Right ventricle myocardium inferior (tissue), 1 donor: ENCODE measurements at regions of chrX and their contacts with region 1.

Region 1: GRCh38 chrX:154478728-154479622 is at the start of gene LAGE3:
- DNase-seq: peak; percentile 97
- ATAC-seq: peak; percentile 96
- total RNA-seq, gene LAGE3: 18.5 TPM

Region 2: DNA sequence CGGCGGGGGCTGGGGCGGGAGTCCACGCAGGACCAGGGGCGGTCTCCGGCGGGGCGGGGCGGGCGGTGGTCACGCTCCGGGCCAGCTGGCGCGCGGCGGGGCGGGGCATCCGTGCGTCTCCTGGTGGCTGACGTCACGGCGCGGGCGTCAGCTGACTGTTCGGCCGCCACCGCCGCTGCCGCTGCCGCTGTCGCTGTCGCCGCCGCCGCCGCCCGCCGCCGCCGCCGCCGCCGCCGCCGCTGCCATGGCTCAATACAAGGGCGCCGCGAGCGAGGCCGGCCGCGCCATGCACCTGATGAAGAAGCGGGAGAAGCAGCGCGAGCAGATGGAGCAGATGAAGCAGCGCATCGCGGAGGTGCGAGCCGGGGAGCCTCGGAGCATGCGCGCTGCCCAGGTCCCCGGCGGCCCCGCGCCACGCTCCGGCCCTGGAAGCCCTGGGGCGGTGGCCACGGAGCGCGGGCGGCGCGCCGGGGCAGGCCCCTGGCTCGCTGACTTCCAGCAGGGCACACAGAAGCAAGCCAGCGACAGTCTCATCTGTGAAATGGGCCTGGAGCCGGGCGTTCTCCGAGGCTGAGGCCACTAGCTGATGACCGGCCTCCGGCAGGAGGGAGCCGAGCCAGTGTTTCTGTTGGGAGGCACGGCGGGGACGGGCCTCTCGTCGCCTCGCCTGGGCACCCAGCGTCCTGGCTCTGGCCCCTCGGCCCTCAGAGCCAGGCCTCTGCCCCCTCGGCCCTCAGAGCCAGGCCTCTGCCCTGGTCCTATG is 34.8 kb before region 1 on chrX and contains the start of gene FAM50A:
- intact Hi-C with region 1: loop called (anchors 5 kb)
- DNase-seq: peak; percentile 88
- ATAC-seq: peak; percentile 86
- total RNA-seq, gene FAM50A: 47.3 TPM

Region 3: GRCh38 chrX:154458114-154458953 is 20.6 kb before region 1 on chrX and contains the start of gene PLXNA3:
- intact Hi-C with region 1: loop called (anchors 2 kb)
- DNase-seq: peak; percentile 70
- ATAC-seq: peak; percentile 70
- total RNA-seq, gene PLXNA3: 23.2 TPM

Region 4: DNA sequence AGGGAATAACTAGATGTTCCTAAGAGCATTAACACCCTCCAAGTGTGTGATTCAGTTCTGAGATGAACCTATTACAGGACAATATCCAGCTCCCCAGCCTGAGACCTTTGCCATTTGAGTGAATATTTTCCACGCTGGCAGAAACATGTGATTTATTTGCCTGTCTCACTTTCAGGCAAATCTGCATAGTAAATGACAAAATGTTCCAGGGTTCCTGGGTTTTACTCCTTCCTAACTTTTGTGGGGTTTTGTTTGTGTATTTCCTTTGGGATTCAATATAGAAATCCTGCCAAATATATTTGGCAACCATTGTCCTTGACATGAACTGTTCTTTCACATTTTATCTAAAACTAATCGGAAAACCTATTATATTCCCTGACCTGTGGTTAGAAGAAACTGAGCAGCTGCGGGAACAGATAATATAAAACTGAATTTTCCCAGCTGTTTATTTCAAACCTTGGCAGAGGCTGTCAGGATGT is 531.1 kb after region 1 on chrX:
- intact Hi-C with region 1: no loop called
- DNase-seq: no peak
- ATAC-seq: peak; percentile 62